Testis (tissue), 5 donors: ENCODE measurements at regions of chr9 and their contacts with region 1.

Region 1: DNA sequence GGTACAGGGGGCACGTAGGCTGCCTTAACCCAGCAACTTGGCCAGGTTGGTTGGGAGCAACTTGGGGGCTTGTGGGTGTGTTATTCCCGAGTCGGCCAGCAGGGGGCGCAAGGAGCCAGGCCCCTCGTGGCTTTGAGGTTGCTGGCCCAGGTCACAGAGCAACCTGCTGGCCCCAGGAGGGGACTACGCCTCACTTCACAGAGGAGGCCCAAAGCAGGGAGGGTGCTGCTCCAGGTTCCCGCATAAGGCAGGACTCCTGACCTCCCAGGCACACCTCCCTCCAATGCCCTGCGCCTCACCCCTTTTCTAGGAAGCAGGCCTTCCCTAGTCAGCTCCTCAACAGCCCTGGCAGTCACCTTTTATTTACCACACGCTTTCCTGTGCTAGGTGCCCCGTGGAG is 18.1 kb downstream of the KYAT1 start:
- DNase-seq: peak; percentile 75
- H3K4me3 ChIP-seq: no peak overlapping the region
- H3K27ac ChIP-seq: no peak overlapping the region
- H3K4me1 ChIP-seq: peaks cover 11% of the 10 kb centered on the region
- H3K27me3 ChIP-seq: no peaks in the 10 kb centered on the region
- CTCF ChIP-seq: peak; percentile 94 to 99 (median 94)
- POLR2A ChIP-seq: no peak

Region 2: GRCh38 chr9:128406848-128407391 is 456.7 kb before region 1 on chr9:
- intact Hi-C with region 1: no loop called
- DNase-seq: no peak
- H3K4me3 ChIP-seq: no peak overlapping the region
- H3K27ac ChIP-seq: no peak overlapping the region
- H3K4me1 ChIP-seq: no peaks in the 10 kb centered on the region
- H3K27me3 ChIP-seq: no peaks in the 10 kb centered on the region
- CTCF ChIP-seq: no peak
- POLR2A ChIP-seq: no peak

Region 3: DNA sequence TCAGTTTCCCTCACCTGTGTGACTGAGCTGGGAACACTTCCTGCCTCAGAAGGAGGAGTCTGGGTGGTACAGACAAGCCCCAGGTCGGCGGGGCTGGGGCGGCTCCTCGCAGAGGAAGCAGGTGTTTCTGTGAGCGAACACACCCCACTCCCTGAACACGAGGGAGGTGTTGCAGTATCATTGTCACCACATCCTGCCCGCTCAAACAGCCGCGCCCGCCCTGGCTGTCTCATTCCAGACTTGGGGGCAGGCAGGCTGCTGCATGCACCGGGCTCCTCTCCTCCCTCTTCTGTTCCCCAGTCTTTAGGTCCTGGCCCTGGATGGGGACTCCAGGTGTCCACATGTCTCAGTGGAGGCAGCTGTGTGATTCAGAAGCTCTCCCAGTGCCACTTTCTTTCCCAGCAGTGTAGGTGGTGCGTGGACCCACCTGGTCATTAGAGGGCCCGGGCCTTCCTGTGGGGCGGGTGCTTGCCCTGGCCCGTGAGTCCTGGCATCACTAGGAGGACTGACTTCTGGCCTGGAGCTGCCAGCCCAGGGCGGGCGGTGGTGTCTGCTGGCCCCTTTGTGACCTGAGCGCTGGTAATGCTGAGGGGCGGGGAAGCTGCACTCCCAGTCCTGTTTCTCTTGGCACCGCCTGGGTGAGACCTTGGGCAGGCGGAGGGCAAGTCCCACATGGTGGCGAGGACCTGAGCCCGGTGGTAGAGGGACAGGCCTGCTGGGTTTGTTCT is 38.9 kb after region 1 on chr9:
- intact Hi-C with region 1: no loop called
- DNase-seq: no peak
- H3K4me3 ChIP-seq: no peak overlapping the region
- H3K27ac ChIP-seq: no peak overlapping the region
- H3K4me1 ChIP-seq: peaks cover 25% of the 10 kb centered on the region
- H3K27me3 ChIP-seq: no peaks in the 10 kb centered on the region
- CTCF ChIP-seq: no peak
- POLR2A ChIP-seq: no peak

Region 4: GRCh38 chr9:128927731-128928411 is 64.2 kb after region 1 on chr9:
- intact Hi-C with region 1: loop called (anchors 5 kb)
- DNase-seq: peak; percentile 57
- H3K4me3 ChIP-seq: no peak overlapping the region
- H3K27ac ChIP-seq: no peak overlapping the region
- H3K4me1 ChIP-seq: peaks cover 7% of the 10 kb centered on the region
- H3K27me3 ChIP-seq: no peaks in the 10 kb centered on the region
- CTCF ChIP-seq: peak; percentile 79 to 90 (median 87)
- POLR2A ChIP-seq: no peak

Region 5: DNA sequence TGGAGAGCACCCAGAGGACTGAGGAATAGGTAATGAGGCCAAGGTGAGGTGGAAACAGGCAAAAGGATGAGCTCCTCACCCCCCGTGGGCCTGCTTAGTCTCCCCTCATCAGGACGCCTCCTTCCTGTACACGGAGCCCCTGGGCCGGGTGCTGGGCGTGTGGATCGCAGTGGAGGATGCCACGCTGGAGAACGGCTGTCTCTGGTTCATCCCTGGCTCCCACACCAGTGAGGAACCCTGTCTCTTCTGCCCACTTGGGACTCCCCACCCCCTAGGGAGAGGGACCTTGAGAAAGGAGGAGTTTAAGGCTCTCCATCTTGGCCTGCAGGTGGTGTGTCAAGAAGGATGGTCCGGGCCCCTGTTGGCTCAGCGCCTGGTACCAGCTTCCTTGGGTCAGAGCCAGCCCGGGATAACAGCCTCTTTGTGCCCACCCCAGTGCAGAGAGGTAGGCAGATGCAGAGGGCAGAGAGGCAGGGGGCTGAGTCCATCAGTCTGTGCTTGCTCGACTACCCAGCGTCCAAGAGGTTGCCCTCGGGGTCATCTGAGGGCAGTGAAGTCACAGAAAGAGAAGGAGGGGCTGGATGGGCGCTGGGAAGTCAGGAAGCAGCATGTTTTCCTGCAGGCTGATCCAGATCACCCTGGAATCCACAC is 76.7 kb after region 1 on chr9:
- intact Hi-C with region 1: loop called (anchors 5 kb)
- DNase-seq: no peak
- H3K4me3 ChIP-seq: no peak overlapping the region
- H3K27ac ChIP-seq: no peak overlapping the region
- H3K4me1 ChIP-seq: peaks cover 7% of the 10 kb centered on the region
- H3K27me3 ChIP-seq: no peaks in the 10 kb centered on the region
- CTCF ChIP-seq: no peak
- POLR2A ChIP-seq: no peak

Region 6: DNA sequence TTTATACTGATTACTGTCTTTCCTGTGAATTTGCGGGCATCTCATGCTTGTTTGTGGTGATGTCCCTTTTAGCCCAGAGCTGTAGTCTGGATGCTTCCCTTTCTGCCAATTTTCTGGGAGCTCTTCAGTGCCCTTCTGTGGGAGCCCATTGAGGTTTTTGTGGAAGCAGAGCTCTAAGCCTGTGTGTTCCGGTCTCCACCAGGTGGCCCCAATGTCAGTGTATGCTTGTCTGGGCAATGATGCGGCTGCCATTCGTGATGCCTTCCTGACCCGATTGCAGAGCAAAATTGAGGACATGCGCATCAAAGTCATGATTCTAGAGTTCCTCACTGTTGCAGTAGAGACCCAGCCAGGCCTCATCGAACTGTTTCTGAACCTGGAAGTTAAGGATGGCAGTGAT is 129.3 kb after region 1 on chr9:
- intact Hi-C with region 1: no loop called
- DNase-seq: peak; percentile 73
- H3K4me3 ChIP-seq: no peak overlapping the region
- H3K27ac ChIP-seq: no peak overlapping the region
- H3K4me1 ChIP-seq: peaks cover 2% of the 10 kb centered on the region
- H3K27me3 ChIP-seq: no peaks in the 10 kb centered on the region
- CTCF ChIP-seq: peak; percentile 11 to 30 (median 16)
- POLR2A ChIP-seq: no peak